Activated T-helper 2 cell treated with anti-CD3 and anti-CD28 coated beads, Interferon-gamma antibody, Interleukin-2, Interleukin-4, amounts not matched to agents 10 μg/mL and 5 μg/mL and 100 μg/mL, durations not matched to agents 14 hours and 24 hours and 36 hours (primary cell): ENCODE measurements at regions of chr4 and their contacts with region 1.

Region 1: GRCh38 chr4:103019308-103020124 is at the start of gene SLC9B1:
- DNase-seq: peak; percentile 92
- H3K4me3 Mint-ChIP-seq: peak within 1 kb of the TSS; percentile 87
- H3K27ac Mint-ChIP-seq: peak within 1 kb of the TSS; percentile 94
- H3K4me1 Mint-ChIP-seq: peaks cover 18% of the 10 kb centered on the region
- H3K27me3 Mint-ChIP-seq: no peaks in the 10 kb centered on the region
- total RNA-seq, gene SLC9B1: 0.28 and 0.57 TPM in 2 replicates

Region 2: DNA sequence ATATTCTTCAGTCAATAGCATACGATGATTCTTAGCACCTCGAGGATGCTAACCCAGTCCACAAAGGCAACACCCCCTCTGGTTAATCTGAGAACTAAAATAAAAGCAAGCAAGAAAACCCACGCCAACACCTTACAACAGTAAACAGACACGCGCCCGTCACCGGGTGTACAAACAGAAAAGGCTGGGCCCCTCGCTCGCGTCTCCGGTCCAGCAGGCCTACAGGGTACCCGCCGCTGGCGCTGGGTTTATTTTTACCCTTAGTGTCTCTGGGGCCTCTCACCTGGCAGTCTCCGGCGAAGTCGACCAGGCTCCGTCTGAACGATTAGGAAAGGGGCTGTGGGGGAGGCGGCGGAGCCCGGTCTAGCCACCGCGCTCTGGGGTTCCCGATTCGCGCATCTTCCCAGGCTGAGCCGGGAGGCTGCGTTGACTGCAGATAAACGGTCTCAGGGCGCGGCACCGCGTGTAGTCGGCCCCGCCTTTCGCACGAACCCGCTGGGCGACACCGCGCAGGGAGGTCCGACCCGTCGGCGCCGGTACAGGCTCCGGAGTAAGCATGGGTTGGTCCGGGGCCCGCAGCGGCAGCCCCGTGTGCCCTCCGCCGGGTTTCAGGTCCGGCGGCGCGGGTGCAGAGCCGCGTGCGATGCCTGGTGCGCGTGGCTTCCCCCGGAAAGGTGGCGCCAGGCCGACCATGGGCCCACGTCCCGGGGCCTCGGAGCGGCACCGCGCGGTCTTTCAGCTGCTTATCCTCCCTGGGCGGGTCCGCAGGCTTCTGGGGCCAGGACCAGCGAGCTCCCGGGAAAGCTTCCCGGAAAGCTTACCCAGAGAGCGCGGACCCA is 56.6 kb after region 1 on chr4:
- intact Hi-C with region 1: loop called (anchors 1 kb)
- DNase-seq: peak; percentile 66
- H3K4me3 Mint-ChIP-seq: peak overlapping the region; percentile 90
- H3K27ac Mint-ChIP-seq: peak overlapping the region; percentile 98
- H3K4me1 Mint-ChIP-seq: peaks cover 45% of the 10 kb centered on the region
- H3K27me3 Mint-ChIP-seq: no peaks in the 10 kb centered on the region